Right cardiac atrium (tissue), 5 donors: ENCODE measurements at regions of chr14 and their contacts with region 1.

Region 1: GRCh38 chr14:92582706-92583452 is 69.3 kb downstream of the RIN3 start:
- DNase-seq: no peak
- ATAC-seq: no peak
- H3K4me3 ChIP-seq: no peak overlapping the region
- H3K27ac ChIP-seq: no peak overlapping the region
- H3K4me1 ChIP-seq: peaks cover 2% of the 10 kb centered on the region
- H3K27me3 ChIP-seq: no peaks in the 10 kb centered on the region

Region 2: DNA sequence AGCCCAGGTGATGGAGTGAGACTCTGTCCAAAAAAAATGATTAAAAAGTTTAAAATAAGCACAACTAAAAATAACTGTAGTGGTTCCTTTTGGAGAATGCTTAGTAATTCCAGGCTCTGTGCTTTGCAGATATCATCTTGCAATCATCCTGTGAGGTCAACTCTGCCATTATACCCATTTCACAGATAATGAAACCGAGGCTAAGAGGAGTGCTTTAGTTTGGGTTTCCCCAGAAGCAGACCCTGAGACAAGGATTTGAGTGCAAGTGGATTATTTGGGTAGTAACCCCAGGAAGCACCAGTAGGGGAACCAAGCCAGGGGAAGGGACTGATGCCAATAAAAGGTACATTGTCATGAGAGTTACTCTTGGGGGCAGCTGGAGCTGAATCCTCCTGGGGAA is 24.6 kb before region 1 on chr14:
- intact Hi-C with region 1: loop called in 1 of 4 experiments (anchors 2 kb)
- DNase-seq: no peak
- ATAC-seq: no peak
- H3K4me3 ChIP-seq: no peak overlapping the region
- H3K27ac ChIP-seq: no peak overlapping the region
- H3K4me1 ChIP-seq: peaks cover 4% of the 10 kb centered on the region
- H3K27me3 ChIP-seq: no peaks in the 10 kb centered on the region